Lower leg skin (tissue), 4 donors: ENCODE measurements at regions of chr10 and their contacts with region 1.

Region 1: DNA sequence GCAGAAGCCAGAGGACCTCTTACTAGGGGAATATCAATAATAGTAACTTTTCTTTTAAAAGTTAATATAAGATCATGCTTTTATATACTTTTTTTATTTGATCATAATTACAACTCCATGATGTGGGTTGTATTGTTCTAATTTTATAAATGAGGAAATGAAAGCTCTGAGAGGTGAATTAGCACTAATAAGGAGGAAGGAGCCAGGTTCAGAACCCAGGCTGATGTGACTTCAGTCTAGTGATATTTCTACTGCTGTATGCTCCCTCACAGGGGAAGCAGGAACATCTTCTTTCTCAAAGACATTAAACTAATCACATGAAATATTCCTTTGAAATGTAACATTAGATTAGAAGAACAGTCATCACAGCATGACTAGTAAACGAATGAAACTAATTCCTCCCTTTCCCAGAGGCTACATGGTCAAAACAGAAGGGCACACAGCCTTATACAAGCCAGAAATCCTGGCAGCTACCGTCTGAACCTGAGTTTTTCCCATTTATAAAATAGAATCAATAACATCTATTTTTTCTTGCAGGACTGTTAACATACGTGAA is 81.4 kb upstream of the GJD4 start:
- DNase-seq: no peak
- H3K4me3 ChIP-seq: no peak overlapping the region
- CTCF ChIP-seq: no peak
- POLR2A ChIP-seq: no peak

Region 2: GRCh38 chr10:35781643-35782035 is 257.9 kb after region 1 on chr10:
- intact Hi-C with region 1: loop called (anchors 5 kb)
- DNase-seq: no peak
- H3K4me3 ChIP-seq: no peak overlapping the region
- CTCF ChIP-seq: no peak
- POLR2A ChIP-seq: no peak